Common myeloid progenitor, CD34-positive (primary cell): ENCODE measurements at regions of chr11 and their contacts with region 1.

Region 1: DNA sequence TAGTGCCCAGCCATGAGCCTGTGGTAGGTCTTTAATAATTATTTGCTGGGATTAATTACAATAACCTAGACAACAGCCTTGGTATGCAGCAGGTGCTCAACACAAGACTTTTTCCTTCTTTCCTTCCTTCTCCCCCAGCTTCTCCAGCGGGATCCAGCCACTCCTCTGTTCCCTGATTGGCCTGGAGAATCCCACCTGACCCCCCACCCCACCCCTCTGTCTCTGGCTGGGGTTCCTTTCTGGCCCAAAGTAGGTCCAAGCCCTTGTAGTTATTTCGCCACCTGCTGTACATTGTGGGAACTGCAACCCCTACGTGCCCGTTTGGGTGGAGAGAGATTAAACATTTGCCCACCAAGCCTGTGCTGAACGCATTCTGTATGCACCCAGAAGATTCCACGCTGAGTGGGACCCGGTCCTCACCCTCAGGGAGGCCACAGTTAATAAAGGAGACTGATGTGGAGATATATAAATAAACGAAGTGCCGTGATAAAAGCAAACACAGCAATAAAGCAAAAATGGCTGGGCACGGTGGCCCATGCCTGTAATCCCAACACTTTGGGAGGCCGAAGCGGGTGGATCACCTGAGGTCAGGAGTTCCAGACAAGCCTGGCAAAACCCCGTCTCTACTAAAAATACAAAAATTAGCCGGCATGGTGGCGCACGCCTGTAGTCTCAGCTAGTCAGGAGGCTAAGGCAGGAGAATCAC is 32.1 kb upstream of the DGKZ start:
- DNase-seq: peak; percentile 81 to 90 (median 84)
- H3K4me3 ChIP-seq: no peak overlapping the region
- H3K27ac ChIP-seq: no peak overlapping the region
- H3K4me1 ChIP-seq: peaks cover 10 to 53% (median 48%) of the 10 kb centered on the region in 4 experiments
- H3K27me3 ChIP-seq: no peaks in the 10 kb centered on the region

Region 2: DNA sequence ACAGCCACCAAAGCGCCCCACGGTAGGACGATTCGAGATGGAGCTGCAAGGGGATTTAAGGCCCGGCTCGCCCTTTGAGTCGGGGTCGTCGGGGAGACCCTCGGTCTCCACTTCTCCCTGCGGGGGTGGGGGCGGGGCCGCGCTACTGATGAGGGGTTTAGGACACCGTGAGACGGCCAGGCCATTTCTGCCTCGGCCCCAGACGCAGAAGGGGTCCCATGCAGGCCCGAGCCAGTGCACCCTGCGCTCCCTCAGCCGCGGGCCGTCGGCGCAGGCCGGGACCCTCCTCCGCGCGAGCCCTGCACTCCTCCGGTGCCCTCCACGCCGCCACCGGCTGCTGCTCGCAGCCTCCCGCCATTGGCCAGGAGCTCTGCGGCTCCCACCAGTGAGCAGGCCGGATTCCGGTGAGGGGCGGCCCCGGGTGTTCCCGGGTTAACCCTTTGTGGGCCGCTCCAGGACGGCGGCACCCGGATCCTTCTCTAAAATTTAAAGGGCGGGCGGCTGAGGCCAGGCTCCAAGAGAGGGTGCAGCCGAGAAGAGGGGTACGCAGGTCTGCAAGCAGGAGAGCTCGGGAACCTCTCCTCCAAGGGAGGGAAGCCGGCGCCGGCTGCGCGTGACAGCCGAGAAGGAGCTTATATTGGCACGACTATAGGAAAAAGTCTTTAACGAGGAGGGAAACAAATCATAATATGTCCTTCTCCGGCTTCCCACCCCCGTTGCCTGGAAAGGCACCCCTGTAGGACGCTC is 19.7 kb before region 1 on chr11:
- CTCF ChIA-PET with region 1: interaction called, 50 read pairs
- POLR2A ChIA-PET with region 1: no interaction called
- DNase-seq: peak; percentile 51 to 79 (median 77)
- H3K4me3 ChIP-seq: peak overlapping the region; percentile 25 to 77 (median 61)
- H3K27ac ChIP-seq: no peak overlapping the region
- H3K4me1 ChIP-seq: peaks cover 1 to 21% (median 16%) of the 10 kb centered on the region in 4 experiments
- H3K27me3 ChIP-seq: peaks cover 0 to 21% (median 12%) of the 10 kb centered on the region in 5 experiments

Region 3: DNA sequence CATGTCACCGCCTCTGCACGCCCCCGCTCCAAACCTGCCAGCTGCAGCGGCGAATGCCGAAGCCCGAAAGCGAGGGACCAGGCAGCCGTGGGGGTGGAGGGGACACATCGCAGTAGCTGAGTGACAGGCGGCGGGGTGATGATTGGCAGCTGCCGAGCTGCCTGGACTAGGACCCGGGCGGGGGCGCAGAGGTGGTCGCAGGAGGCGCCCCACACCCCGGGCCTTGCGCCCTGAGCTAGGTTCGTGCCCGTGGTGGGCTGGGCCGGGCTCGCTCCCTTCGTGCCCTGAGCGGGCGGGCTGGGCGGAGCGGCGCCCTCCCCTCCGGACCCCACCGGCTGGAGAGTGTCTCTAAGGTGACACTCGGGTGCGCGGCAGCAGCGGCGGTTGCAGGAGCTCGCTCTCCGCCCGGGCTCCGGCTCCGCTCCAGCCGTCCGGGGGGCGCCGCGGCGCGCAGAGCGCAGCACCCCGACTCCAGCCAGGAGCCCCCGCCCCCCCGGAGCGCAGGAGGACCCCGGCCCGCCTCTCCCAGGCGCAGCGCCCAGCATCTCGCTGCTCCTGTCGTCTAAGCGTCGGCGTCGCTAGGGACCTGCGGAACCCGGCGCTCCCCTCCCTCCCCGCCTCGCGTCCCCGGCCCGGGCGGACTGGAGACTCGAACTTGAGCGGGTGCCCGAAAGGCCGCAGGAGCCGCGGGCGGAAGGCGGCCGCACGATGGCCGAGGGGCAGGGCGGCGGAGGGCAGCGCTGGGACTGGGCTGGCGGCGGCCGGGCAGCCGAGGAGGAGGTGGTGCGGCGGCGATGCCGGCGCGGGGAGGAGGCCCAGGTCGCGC is 17.6 kb after region 1 on chr11:
- CTCF ChIA-PET with region 1: interaction called, 44 read pairs
- POLR2A ChIA-PET with region 1: interaction called, 4 read pairs
- DNase-seq: peak in 1 of 3 donors; percentile 48
- H3K4me3 ChIP-seq: peak overlapping the region; percentile 34 to 76 (median 58)
- H3K27ac ChIP-seq: no peak overlapping the region
- H3K4me1 ChIP-seq: peaks cover 16 to 68% (median 56%) of the 10 kb centered on the region in 4 experiments
- H3K27me3 ChIP-seq: peaks cover 0 to 20% (median 7%) of the 10 kb centered on the region in 5 experiments

Region 4: DNA sequence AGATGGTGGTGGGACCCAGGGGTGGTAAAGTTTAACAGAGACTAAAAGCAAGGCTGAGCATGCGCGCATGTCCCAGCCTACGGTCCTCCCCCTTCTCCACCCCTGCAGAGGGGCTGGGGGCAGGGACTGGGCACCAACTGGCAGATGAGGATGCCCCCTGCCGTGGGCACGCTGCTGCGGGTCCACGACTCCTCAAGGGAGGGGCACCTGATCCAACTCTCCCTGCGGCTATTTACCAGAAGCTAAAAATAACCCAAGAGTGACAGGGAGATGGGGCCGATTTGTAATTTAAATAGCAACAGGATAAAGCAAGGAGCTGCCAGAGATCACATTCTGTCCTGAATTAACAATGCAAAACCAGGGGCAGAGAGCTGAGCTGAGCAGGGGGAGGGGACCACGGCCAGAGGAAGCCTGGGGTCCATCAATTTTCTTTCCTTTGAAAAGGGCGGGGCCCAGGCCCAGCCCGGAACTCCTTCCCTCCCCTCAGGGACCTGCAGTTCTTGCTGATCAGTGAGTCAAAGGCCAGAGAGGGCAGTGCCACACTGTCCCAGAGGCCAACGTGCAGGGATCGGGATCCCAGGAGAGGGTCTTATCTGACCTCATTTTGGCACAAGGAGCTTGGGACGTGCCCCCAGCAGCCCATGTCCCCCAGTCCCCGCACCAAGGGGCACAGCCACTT is 23.9 kb after region 1 on chr11:
- CTCF ChIA-PET with region 1: interaction called, 94 read pairs
- POLR2A ChIA-PET with region 1: no interaction called
- DNase-seq: peak in 2 of 3 donors; percentile 45 to 56
- H3K4me3 ChIP-seq: peak overlapping the region in 5 of 7 experiments; percentile 7 to 68 (median 44)
- H3K27ac ChIP-seq: peak overlapping the region in 1 of 2 experiments; percentile 28
- H3K4me1 ChIP-seq: peaks cover 6 to 82% (median 72%) of the 10 kb centered on the region in 4 experiments
- H3K27me3 ChIP-seq: peaks cover 0 to under 1% (median 0%) of the 10 kb centered on the region in 5 experiments

Region 5: DNA sequence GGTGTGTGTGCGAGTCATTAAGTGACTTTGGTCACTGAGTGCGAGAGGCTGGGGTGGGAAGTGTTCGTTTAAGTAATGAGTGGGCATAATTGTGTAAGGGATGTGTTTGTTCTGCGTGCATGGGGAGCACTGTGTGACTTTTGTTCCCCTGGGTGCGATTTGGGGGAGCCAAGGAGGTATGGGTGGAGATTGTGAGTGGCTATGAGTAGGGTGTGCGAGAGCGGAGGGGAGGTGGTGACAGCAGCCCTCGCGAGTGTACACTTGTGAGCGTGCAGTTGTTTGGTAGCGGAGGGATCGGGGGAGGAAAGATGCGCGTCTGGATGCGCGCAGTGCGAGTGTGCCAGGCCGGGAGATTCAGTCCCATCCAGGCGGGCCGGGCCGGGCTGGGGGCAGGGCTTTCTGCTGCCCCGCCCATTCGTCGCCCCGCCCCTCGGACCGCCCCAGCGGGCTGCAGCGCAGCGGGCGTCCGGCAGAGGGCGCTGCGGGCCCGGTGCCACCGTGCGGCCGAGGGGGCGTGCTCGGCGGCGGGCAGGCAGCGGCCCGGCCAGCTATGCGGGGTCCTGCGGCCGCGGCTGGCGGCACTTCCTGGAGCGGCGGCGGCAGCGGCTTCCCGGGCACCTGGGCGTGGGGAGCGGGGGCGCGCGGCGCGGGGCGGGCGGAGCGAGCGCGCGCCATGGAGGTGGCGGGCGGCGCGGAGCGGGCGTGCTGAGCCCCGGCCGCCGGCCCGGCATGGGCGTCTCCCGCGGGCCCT is 31.9 kb after region 1 on chr11 and contains the start of gene DGKZ:
- CTCF ChIA-PET with region 1: interaction called, 94 read pairs
- POLR2A ChIA-PET with region 1: interaction called, 6 read pairs
- DNase-seq: peak; percentile 83 to 91 (median 91)
- H3K4me3 ChIP-seq: peak within 1 kb of the TSS; percentile 67 to 97 (median 84)
- H3K27ac ChIP-seq: peak within 1 kb of the TSS; percentile 54 to 79
- H3K4me1 ChIP-seq: peaks cover 20 to 88% (median 84%) of the 10 kb centered on the region in 4 experiments
- H3K27me3 ChIP-seq: no peaks in the 10 kb centered on the region

Region 6: DNA sequence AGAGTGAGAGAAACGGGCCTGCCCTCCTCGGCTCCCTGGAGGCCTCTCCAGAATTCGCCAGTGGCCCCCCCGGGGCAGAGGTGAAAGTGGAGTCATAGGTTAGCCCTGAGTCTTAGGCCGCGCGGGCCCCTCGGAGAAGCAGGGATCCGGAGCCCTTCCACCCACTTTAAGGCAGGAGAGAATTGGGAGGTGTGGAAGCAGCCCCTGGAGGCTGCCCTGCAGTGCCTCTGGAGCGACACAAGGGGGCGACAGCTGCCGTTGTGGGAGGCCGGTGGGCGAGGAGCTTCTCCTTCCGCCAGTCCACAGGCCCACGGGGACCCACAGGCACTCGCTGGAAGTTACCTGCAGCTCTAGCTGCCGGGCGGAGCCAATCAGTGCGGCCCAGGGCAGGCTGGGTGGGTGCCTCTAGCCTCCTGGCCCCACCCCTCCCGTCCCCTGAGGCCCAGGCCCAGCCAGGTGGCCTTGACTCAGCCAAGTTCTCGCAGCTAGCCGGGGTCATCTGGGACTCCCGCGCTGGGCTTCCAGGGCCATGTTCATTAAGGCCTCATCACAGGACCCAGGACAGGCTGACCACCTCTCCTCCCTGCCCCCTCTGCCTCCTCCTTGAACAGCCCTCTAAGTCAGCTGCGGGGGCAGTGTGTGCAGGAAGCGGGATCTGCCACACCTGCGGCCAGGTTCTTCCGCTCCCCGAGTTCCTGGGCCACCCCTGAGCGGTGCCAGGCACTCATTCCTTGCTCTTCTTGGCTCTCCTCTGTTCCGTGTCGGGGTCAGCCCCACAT is 37.1 kb after region 1 on chr11:
- CTCF ChIA-PET with region 1: interaction called, 94 read pairs
- POLR2A ChIA-PET with region 1: no interaction called
- DNase-seq: peak; percentile 70 to 81 (median 80)
- H3K4me3 ChIP-seq: peak overlapping the region in 1 of 7 experiments; percentile 5
- H3K27ac ChIP-seq: peak overlapping the region in 1 of 2 experiments; percentile 56
- H3K4me1 ChIP-seq: peaks cover 11 to 75% (median 64%) of the 10 kb centered on the region in 4 experiments
- H3K27me3 ChIP-seq: no peaks in the 10 kb centered on the region